H1 (cell line): ENCODE measurements at regions of chr7 and their contacts with region 1.

Region 1: GRCh38 chr7:71019706-71020105 is 112.2 kb upstream of the GALNT17 start:
- DNase-seq: no peak
- H3K4me3 ChIP-seq: no peak overlapping the region
- H3K27ac ChIP-seq: no peak overlapping the region
- H3K4me1 ChIP-seq: no peaks in the 10 kb centered on the region
- H3K27me3 ChIP-seq: no peaks in the 10 kb centered on the region
- CTCF ChIP-seq: no peak
- EP300 ChIP-seq: no peak
- POLR2A ChIP-seq: no peak
- RAD21 ChIP-seq: no peak

Region 2: GRCh38 chr7:71034243-71034642 is 14.5 kb after region 1 on chr7:
- CTCF ChIA-PET with region 1: interaction called, 12 read pairs
- POLR2A ChIA-PET with region 1: no interaction called
- DNase-seq: no peak
- H3K4me3 ChIP-seq: no peak overlapping the region
- H3K27ac ChIP-seq: no peak overlapping the region
- H3K4me1 ChIP-seq: no peaks in the 10 kb centered on the region
- H3K27me3 ChIP-seq: no peaks in the 10 kb centered on the region
- CTCF ChIP-seq: no peak
- EP300 ChIP-seq: no peak
- POLR2A ChIP-seq: no peak
- RAD21 ChIP-seq: no peak